ENCODE measurements at regions of chr15 and their contacts with region 1.

Region 1: DNA sequence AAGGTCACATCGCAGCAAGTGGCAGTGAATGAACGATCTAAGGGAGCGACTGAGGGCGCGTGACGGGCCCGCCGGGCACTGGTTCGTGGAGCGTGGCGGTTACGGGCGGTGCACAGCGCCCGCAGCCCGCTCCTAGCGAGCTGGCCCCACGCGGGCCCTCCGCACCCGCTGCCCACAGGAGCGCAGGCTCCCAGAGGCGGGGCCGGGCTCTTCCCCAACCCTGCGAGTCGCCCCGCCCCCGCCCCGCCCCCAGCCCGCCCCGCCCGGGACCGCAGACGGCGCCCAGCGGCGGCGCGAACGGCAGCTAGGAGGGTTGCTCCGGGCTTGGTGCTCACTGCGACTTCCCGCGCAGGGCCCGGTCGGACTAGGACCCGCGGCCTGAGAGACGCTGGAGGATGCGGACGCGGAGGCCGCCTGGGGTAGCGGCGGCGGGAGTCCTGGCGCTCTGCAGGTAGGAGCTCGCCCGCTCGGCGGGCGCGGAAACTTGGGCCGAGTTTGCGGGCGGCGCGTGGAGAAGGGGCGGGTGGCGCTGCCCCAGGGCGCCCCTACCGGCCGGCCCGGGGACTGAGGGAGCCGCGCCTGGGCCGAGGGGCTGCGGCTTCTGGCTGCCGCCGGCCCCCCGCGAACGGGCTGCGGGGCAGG is at the start of gene C15orf39:
- DNase-seq: peak; percentile 76 to 94 (median 84)
- ATAC-seq: peak; percentile 79
- H3K4me3 ChIP-seq: peak within 1 kb of the TSS; percentile 97 to 100
- H3K27ac ChIP-seq: peak within 1 kb of the TSS; percentile 93 to 98
- H3K4me1 ChIP-seq: peaks cover 21 to 61% of the 10 kb centered on the region in 2 donors
- H3K27me3 ChIP-seq: no peaks in the 10 kb centered on the region
- CTCF ChIP-seq: peak; percentile 97 to 98
- polyA plus RNA-seq, gene C15orf39: 7.8 to 14.7 (median 13.1) TPM

Region 2: DNA sequence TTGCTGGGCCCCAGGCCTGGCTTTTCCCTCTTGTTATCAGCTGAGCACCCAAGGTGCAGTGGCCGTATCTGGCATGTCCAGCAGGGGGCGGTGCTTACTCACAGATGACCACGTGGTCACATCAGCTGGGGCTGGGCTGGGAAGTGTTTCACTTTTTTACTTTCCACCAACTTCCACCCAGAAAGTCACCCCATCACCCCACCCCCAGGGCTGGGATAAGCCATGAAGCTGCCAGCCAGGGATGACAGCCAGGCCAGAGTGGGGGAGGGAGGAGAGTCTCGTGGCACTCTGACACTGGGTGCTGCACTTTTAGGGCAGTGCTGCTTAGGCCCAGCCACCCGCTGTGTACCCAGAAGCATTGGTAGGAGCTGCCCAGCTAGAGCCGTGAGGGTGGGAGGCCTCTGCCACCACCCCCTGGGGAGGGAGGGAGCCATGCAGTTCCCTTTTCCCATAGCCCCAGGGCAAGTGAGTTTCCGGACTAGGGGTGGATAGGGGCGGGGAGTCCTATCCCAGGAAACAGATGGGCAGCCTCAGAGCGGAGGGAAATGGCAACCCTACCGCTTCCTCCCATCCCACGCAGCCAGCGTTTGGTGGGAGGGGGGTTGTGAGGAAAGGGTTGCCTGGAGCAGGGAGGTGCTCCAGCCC is 172.2 kb before region 1 on chr15:
- intact Hi-C with region 1: loop called (anchors 2 to 10 kb)
- DNase-seq: peak; percentile 79 to 97 (median 92)
- ATAC-seq: peak; percentile 94
- H3K4me3 ChIP-seq: no peak overlapping the region
- H3K27ac ChIP-seq: peak overlapping the region; percentile 79 to 83
- H3K4me1 ChIP-seq: peaks cover 29 to 60% of the 10 kb centered on the region in 2 donors
- H3K27me3 ChIP-seq: no peaks in the 10 kb centered on the region
- CTCF ChIP-seq: peak; percentile 91 to 98

Region 3: GRCh38 chr15:75112848-75113492 is 88.8 kb before region 1 on chr15:
- intact Hi-C with region 1: loop called in 1 of 2 experiments (anchors 10 kb)
- DNase-seq: no peak
- ATAC-seq: peak; percentile 39
- H3K4me3 ChIP-seq: no peak overlapping the region
- H3K27ac ChIP-seq: peak overlapping the region in 1 of 2 donors; percentile 84
- H3K4me1 ChIP-seq: peaks cover 0 to 54% of the 10 kb centered on the region in 2 donors
- H3K27me3 ChIP-seq: no peaks in the 10 kb centered on the region
- CTCF ChIP-seq: no peak

Region 4: DNA sequence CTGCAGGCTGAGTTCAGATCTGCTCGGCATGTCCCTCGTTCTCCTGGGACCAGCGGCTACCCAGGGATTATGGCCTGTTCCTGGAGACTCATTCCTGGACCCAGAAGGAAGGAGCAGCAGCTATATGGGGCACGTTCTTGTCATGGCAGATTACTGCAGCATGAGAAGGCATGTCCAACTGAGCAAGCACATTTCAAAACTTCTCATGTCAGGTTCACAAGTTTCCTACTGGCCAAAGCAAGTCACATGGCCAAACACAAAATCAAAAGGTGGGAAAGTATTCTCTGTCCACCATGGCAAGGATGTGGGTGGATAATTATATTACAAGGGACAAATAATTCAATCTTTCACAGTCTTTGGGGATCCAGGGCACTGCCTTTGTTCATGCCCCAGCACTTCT is 71.9 kb before region 1 on chr15:
- intact Hi-C with region 1: no loop called
- DNase-seq: no peak
- ATAC-seq: no peak
- H3K4me3 ChIP-seq: no peak overlapping the region
- H3K27ac ChIP-seq: peak overlapping the region in 1 of 2 donors; percentile 85
- H3K4me1 ChIP-seq: peaks cover 4 to 62% of the 10 kb centered on the region in 2 donors
- H3K27me3 ChIP-seq: no peaks in the 10 kb centered on the region
- CTCF ChIP-seq: no peak

Region 5: GRCh38 chr15:75672646-75673425 is 471.1 kb after region 1 on chr15:
- intact Hi-C with region 1: no loop called
- DNase-seq: peak in 2 of 4 donors; percentile 38 to 53
- ATAC-seq: peak; percentile 63
- H3K4me3 ChIP-seq: no peak overlapping the region
- H3K27ac ChIP-seq: peak overlapping the region; percentile 57 to 76
- H3K4me1 ChIP-seq: peaks cover 14 to 16% of the 10 kb centered on the region in 2 donors
- H3K27me3 ChIP-seq: no peaks in the 10 kb centered on the region
- CTCF ChIP-seq: no peak

Measured in left lung (tissue), 14 donors.